Calu3 (cell line): ENCODE measurements at regions of chr17 and their contacts with region 1.

Region 1: GRCh38 chr17:8118769-8119580 is 661 bp upstream of the ALOXE3 start:
- DNase-seq: peak; percentile 85
- H3K4me3 Mint-ChIP-seq: peak overlapping the region; percentile 91
- H3K27ac Mint-ChIP-seq: peak overlapping the region; percentile 98
- H3K4me1 Mint-ChIP-seq: peaks cover 32% of the 10 kb centered on the region
- H3K27me3 Mint-ChIP-seq: peaks cover 56% of the 10 kb centered on the region
- CTCF ChIP-seq: peak; percentile 43

Region 2: DNA sequence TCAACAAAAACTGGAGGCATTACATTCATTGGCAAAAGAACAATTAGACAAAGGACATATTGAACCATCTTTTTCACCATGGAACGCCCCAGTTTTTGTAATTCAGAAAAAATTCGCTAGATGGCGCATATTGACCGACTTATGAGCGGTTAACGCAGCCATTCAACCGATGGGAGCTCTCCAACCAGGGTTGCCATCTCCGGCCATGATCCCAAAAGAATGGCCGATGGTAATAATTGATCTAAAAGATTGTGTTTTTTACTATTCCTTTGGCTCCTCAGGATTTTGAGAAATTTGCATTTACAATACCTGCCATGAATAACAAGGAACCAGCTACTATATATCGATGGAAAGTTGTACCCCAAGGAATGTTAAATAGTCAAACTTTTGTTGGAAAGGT is 58.7 kb before region 1 on chr17:
- CTCF ChIA-PET with region 1: interaction called, 9 read pairs
- intact Hi-C with region 1: loop called (anchors 5 kb)
- DNase-seq: peak; percentile 67
- H3K4me3 Mint-ChIP-seq: no peak overlapping the region
- H3K27ac Mint-ChIP-seq: no peak overlapping the region
- H3K4me1 Mint-ChIP-seq: peaks cover 25% of the 10 kb centered on the region
- H3K27me3 Mint-ChIP-seq: peaks cover 75% of the 10 kb centered on the region
- CTCF ChIP-seq: peak; percentile 23

Region 3: GRCh38 chr17:8079291-8080207 is 39.4 kb before region 1 on chr17:
- CTCF ChIA-PET with region 1: interaction called, 3 read pairs
- intact Hi-C with region 1: loop called (anchors 5 kb)
- DNase-seq: peak; percentile 75
- H3K4me3 Mint-ChIP-seq: peak overlapping the region; percentile 67
- H3K27ac Mint-ChIP-seq: no peak overlapping the region
- H3K4me1 Mint-ChIP-seq: no peaks in the 10 kb centered on the region
- H3K27me3 Mint-ChIP-seq: peaks cover 47% of the 10 kb centered on the region
- CTCF ChIP-seq: peak; percentile 58

Region 4: DNA sequence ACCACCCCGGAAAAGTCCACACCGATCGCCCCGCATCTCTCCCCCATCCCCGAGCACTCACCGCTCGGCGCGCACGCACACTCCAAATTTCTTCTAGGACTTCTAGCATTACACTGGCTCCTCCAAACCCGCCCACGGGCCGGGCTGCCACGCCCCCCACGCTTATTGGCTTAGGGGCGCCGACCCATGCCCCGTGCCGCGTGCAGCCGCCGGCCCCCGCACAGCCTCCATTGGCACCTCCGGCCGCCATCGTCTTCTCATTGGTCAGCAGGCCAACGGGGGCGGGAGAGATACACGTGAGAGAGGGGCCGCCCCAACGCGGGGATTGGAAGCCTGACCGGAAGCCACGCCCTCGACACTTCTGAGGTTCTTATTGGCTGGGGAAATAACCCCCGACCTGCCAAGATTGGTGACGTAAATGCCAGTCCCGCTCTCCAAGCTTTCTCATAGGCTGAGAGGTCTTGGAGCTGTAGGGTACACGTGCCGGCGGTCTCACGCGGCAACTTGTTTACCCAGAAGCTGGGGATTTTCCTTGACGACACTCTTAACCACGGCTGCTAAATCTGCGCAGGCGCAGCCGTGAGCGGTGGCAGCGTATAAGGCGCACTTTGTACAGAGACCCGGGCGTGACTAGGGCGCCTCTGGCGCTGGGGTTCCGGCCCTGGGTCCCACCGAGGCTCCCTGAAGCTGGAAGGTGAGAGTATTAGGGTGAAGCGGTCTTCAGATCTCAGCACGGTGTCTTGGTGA is 37.4 kb after region 1 on chr17:
- CTCF ChIA-PET with region 1: interaction called, 8 read pairs
- intact Hi-C with region 1: loop called (anchors 5 kb)
- DNase-seq: peak; percentile 98
- H3K4me3 Mint-ChIP-seq: no peak overlapping the region
- H3K27ac Mint-ChIP-seq: no peak overlapping the region
- H3K4me1 Mint-ChIP-seq: no peaks in the 10 kb centered on the region
- H3K27me3 Mint-ChIP-seq: no peaks in the 10 kb centered on the region
- CTCF ChIP-seq: no peak

Region 5: DNA sequence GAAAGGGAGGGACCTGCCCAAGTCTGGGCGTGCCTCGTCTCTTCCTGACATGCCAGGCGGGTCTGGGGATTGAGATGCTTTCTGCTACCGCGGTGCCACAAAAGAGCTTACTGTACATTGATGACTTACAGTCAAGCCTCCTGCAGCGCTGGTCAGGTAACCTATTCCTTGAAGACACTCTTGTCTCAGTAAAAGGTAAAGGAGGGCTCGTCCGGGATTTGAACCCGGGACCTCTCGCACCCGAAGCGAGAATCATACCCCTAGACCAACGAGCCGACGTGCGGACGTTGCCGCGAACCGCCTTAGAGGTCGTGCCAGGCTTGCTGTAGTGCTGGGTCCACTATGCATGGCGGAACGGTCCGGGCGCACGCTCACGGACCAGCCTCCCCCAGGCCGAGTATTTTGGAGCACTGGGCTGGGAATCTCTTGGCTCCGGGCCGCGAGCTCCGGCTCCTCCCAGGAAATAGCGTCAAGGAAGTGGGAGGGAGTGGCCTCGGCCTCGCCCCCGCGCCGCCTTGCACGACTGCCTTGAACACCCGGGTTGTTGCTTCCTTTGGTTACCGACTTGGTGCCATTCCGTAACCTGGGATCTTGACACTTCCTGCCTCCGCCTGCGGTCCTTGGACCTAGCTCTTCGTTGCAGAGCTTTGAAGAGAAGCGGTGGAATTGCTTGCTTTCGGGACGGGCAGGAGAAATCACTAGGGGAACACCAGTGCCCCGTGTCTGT is 103.8 kb after region 1 on chr17:
- CTCF ChIA-PET with region 1: no interaction called
- intact Hi-C with region 1: no loop called
- DNase-seq: peak; percentile 88
- H3K4me3 Mint-ChIP-seq: peak overlapping the region; percentile 87
- H3K27ac Mint-ChIP-seq: peak overlapping the region; percentile 99
- H3K4me1 Mint-ChIP-seq: peaks cover 20% of the 10 kb centered on the region
- H3K27me3 Mint-ChIP-seq: no peaks in the 10 kb centered on the region
- CTCF ChIP-seq: no peak

Region 6: DNA sequence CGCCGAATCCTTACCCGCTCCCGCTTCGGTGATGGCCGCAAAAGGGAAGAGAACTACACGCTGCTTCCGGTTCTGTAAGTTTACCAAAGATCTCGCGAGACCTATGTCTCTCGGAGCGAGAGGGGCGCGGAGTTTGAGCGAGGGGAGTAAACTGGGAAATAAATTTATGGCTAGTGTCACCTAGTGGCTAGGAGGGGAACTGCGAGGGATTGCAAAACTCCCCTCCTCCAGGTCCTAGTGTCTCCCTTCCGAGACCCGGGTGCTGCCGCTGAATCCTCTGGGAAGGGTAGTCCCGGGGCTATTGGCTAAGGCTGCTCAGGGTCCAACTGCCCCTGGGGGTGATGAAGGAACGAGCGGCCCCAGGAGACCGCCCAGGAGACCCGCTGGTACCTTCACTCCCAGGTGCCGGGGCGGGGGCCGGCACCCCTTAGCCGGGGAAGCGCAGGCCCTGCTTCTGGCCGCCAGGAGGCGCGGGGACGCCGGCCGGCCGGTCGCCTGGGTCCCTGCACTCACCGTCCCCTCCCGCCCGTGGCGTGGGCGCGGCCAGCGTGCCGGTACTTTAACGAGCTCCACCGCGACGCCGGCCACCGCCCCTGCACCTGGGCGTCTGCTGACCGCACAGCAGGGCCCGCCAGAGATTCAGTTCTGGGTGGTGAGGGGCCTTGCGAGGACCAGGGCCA is 264.3 kb after region 1 on chr17 and contains the start of gene RPL26:
- CTCF ChIA-PET with region 1: no interaction called
- intact Hi-C with region 1: no loop called
- DNase-seq: peak; percentile 89
- H3K4me3 Mint-ChIP-seq: peak within 1 kb of the TSS; percentile 89
- H3K27ac Mint-ChIP-seq: peak within 1 kb of the TSS; percentile 95
- H3K4me1 Mint-ChIP-seq: peaks cover 24% of the 10 kb centered on the region
- H3K27me3 Mint-ChIP-seq: no peaks in the 10 kb centered on the region
- CTCF ChIP-seq: peak; percentile 92
- total RNA-seq, gene RPL26: 739 and 842 TPM in 2 replicates